Calu3 (cell line): ENCODE measurements at regions of chr1 and their contacts with region 1.

Region 1: GRCh38 chr1:216221260-216221700 is 202.0 kb downstream of the USH2A start:
- DNase-seq: peak; percentile 71
- H3K4me3 Mint-ChIP-seq: peak overlapping the region; percentile 78
- H3K27ac Mint-ChIP-seq: peak overlapping the region; percentile 85
- H3K4me1 Mint-ChIP-seq: peaks cover 32% of the 10 kb centered on the region
- H3K27me3 Mint-ChIP-seq: no peaks in the 10 kb centered on the region
- CTCF ChIP-seq: peak; percentile 67

Region 2: GRCh38 chr1:215682232-215682631 is 539.0 kb before region 1 on chr1:
- CTCF ChIA-PET with region 1: no interaction called
- intact Hi-C with region 1: loop called (anchors 1 kb)
- DNase-seq: peak; percentile 25
- H3K4me3 Mint-ChIP-seq: no peak overlapping the region
- H3K27ac Mint-ChIP-seq: no peak overlapping the region
- H3K4me1 Mint-ChIP-seq: no peaks in the 10 kb centered on the region
- H3K27me3 Mint-ChIP-seq: no peaks in the 10 kb centered on the region
- CTCF ChIP-seq: peak; percentile 55

Region 3: GRCh38 chr1:215992620-215993019 is 228.7 kb before region 1 on chr1:
- CTCF ChIA-PET with region 1: interaction called, 5 read pairs
- intact Hi-C with region 1: loop called (anchors 1 kb)
- DNase-seq: peak; percentile 22
- H3K4me3 Mint-ChIP-seq: no peak overlapping the region
- H3K27ac Mint-ChIP-seq: no peak overlapping the region
- H3K4me1 Mint-ChIP-seq: peaks cover 8% of the 10 kb centered on the region
- H3K27me3 Mint-ChIP-seq: no peaks in the 10 kb centered on the region
- CTCF ChIP-seq: peak; percentile 29

Region 4: GRCh38 chr1:216111842-216112241 is 109.4 kb before region 1 on chr1:
- CTCF ChIA-PET with region 1: interaction called, 25 read pairs
- intact Hi-C with region 1: loop called (anchors 1 kb)
- DNase-seq: no peak
- H3K4me3 Mint-ChIP-seq: no peak overlapping the region
- H3K27ac Mint-ChIP-seq: no peak overlapping the region
- H3K4me1 Mint-ChIP-seq: no peaks in the 10 kb centered on the region
- H3K27me3 Mint-ChIP-seq: no peaks in the 10 kb centered on the region
- CTCF ChIP-seq: peak; percentile 25

Region 5: DNA sequence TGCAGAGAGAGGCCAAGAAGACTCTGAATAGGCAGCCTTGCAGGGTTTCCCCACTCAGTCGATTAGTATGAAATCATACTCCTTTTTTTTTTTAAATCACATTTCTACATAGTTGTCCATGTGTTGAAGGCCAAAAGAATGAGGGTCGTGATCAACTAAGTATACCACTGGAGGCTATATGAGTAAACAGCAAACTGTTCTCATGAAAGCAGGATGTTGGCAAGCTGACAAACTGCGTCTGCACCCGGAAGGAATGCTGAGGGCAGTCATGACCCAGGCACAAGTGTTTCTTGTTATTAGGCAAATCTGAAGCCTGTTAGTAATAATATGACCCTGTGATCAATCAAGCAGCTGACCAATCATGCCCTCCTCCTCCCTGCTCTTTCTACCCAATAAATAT is 11.2 kb before region 1 on chr1:
- CTCF ChIA-PET with region 1: interaction called, 27 read pairs
- intact Hi-C with region 1: no loop called
- DNase-seq: peak; percentile 57
- H3K4me3 Mint-ChIP-seq: no peak overlapping the region
- H3K27ac Mint-ChIP-seq: no peak overlapping the region
- H3K4me1 Mint-ChIP-seq: peaks cover 22% of the 10 kb centered on the region
- H3K27me3 Mint-ChIP-seq: no peaks in the 10 kb centered on the region
- CTCF ChIP-seq: no peak